ENCODE measurements at regions of chr21 and their contacts with region 1.

Region 1: DNA sequence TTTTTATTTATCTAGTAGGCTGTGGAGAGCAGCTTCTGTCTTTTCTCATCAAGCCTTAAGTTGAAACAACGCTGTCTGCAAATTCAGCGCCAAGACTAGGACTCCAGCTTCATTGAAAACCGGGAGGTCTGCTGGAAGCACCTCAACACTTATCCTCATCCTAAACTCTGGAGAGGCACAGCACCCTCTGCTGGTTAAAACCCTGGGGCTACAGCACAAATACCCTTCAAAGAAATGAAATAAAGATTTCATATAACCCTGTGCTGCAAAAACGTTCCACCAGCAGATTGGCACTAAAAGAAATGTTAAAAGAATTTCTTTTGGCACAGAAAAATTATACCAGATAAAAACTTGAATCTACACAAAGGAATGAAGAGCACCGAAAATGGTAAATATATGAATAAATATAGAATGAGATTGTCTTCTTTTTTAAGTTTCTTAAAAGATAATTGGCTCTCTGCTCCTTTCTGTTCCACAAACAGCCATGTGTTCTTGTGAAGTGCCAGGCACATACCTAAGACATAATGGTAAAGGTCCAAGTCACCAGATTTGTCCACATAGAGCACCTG is 227.7 kb upstream of the SAMSN1 start:
- DNase-seq: peak; percentile 28
- ATAC-seq: peak; percentile 49
- H3K4me3 Mint-ChIP-seq: no peak overlapping the region
- H3K27ac Mint-ChIP-seq: no peak overlapping the region
- H3K4me1 Mint-ChIP-seq: peaks cover 9% of the 10 kb centered on the region
- H3K27me3 Mint-ChIP-seq: no peaks in the 10 kb centered on the region
- CTCF ChIP-seq: peak; percentile 26

Region 2: GRCh38 chr21:14403681-14404318 is 370.1 kb before region 1 on chr21:
- CTCF ChIA-PET with region 1: interaction called, 10 read pairs
- POLR2A ChIA-PET with region 1: no interaction called
- intact Hi-C with region 1: loop called (anchors 1 kb)
- DNase-seq: no peak
- ATAC-seq: peak; percentile 57
- H3K4me3 Mint-ChIP-seq: no peak overlapping the region
- H3K27ac Mint-ChIP-seq: no peak overlapping the region
- H3K4me1 Mint-ChIP-seq: no peaks in the 10 kb centered on the region
- H3K27me3 Mint-ChIP-seq: no peaks in the 10 kb centered on the region
- CTCF ChIP-seq: peak; percentile 77

Region 3: DNA sequence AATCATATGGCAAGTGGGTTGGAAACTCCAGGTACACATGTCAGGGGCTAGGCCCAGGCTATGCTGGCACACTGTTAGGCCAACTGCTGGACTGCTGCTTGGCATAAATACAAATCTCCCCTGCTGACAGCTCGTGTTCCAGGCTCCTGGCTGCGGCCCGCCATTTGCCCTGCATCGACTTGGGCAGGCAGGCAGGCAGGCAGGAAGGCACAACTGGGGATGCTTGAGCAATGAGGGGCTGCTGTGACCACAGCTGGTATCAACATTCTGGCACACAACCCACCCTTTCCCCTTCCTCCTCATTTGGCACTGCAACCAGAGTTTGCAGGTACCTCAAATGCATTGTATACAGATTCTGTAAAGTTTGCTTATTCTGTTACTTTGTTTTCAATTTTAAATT is 280.9 kb before region 1 on chr21:
- CTCF ChIA-PET with region 1: no interaction called
- POLR2A ChIA-PET with region 1: no interaction called
- intact Hi-C with region 1: no loop called
- DNase-seq: no peak
- ATAC-seq: no peak
- H3K4me3 Mint-ChIP-seq: no peak overlapping the region
- H3K27ac Mint-ChIP-seq: no peak overlapping the region
- H3K4me1 Mint-ChIP-seq: peaks cover under 1% of the 10 kb centered on the region
- H3K27me3 Mint-ChIP-seq: no peaks in the 10 kb centered on the region
- CTCF ChIP-seq: no peak